H1 (cell line): ENCODE measurements at regions of chr12 and their contacts with region 1.

Region 1: DNA sequence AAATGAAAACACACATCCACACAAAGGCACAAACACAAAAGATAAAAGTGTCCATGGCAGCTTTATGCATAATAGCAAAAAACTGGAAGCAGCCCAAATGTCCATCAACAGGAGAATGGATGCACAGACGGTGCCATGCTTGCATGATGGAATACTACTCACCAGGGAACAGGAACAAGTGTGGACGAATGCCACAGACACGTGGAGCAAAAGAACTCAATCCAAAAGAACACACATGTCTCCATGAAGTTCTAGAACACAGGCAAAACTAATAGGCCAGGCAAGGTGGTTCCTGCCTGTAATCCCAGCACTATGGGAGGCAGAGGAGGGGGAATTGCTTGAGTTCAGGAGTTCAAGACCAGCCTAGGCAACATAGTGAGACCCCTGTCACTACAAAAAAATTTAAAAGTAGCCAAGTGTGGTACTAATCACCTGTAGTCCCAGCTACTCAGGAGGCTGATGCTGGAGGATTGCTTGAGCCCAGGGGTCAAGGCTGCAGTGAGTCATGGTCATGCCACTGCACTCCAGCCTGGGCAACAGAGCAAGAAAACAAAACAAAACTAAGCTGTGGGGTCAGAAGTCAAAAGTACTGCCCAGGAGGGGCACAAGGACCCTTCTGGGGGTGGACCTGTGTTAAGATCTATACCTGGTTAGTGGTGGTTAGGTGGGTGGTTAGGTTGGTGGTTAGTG is 7.3 kb upstream of the TMEM119 start:
- DNase-seq: no peak
- H3K4me3 ChIP-seq: no peak overlapping the region
- H3K27ac ChIP-seq: no peak overlapping the region
- H3K4me1 ChIP-seq: peaks cover 0 to 8% (median 0%) of the 10 kb centered on the region in 4 experiments; a peak in 2 of 7 replicates
- H3K27me3 ChIP-seq: no peaks in the 10 kb centered on the region
- CTCF ChIP-seq: no peak
- EP300 ChIP-seq: no peak
- POLR2A ChIP-seq: no peak
- RAD21 ChIP-seq: no peak

Region 2: DNA sequence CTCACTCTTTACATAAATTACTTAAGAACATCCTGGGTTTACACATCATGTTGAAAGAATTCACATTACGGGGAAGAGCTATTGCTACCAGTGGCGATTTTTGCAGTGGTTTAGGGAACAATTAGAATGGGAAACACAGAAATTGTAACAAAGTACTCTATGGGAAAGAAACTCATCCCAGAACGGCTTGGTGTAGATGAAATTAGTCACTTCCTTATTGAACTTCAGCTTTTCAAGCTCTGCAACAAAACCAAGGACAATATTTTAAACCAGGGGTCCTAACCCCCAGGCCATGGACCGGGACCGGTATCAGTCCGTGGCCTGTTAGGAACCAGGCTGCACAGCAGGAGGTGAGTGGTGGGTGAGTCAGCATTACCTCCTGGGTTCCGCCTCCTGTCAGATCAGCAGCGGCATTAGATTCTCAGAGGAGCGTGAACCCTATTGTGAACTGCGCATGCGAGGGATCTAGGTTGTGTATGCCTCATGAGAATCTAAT is 122.4 kb before region 1 on chr12:
- CTCF ChIA-PET with region 1: no interaction called
- POLR2A ChIA-PET with region 1: no interaction called
- DNase-seq: no peak
- H3K4me3 ChIP-seq: no peak overlapping the region
- H3K27ac ChIP-seq: no peak overlapping the region
- H3K4me1 ChIP-seq: peaks cover 0 to 5% (median 3%) of the 10 kb centered on the region in 4 experiments; a peak in 3 of 7 replicates
- H3K27me3 ChIP-seq: no peaks in the 10 kb centered on the region
- CTCF ChIP-seq: no peak
- EP300 ChIP-seq: no peak
- POLR2A ChIP-seq: no peak
- RAD21 ChIP-seq: no peak

Region 3: GRCh38 chr12:108589028-108589839 is 15.9 kb before region 1 on chr12:
- CTCF ChIA-PET with region 1: interaction called, 10 read pairs
- POLR2A ChIA-PET with region 1: interaction called, 5 read pairs
- DNase-seq: no peak
- H3K4me3 ChIP-seq: no peak overlapping the region
- H3K27ac ChIP-seq: peak overlapping the region; percentile 22; the same call in 1 of the 2 replicates
- H3K4me1 ChIP-seq: peaks cover 0 to 17% (median 11%) of the 10 kb centered on the region in 4 experiments; a peak in 6 of 7 replicates
- H3K27me3 ChIP-seq: no peaks in the 10 kb centered on the region
- CTCF ChIP-seq: no peak
- EP300 ChIP-seq: no peak
- POLR2A ChIP-seq: no peak
- RAD21 ChIP-seq: no peak